Calu3 (cell line): ENCODE measurements at regions of chr9 and their contacts with region 1.

Region 1: DNA sequence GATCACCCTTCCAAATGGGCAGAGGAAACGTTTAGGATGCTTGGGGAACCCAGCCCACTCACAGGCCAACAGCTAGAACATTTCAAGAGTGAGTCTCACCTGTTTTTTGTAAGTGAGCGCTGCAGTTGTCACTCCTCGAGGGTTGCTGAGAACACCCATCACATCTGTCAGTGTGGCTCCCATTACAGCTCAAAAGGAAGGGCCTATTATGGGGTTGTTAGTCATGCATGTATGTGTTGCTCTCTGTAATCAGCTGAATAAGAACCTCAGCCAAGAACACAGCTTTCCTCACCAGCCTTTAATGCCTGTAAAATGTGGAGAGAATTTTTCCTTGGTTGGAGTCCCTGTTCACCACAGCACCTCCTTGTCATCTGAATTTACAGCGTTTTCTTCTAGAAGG is 196.3 kb upstream of the KLF4 start:
- DNase-seq: no peak
- H3K4me3 Mint-ChIP-seq: no peak overlapping the region
- H3K27ac Mint-ChIP-seq: no peak overlapping the region
- H3K4me1 Mint-ChIP-seq: no peaks in the 10 kb centered on the region
- H3K27me3 Mint-ChIP-seq: no peaks in the 10 kb centered on the region
- CTCF ChIP-seq: no peak

Region 2: GRCh38 chr9:107826966-107827703 is 141.2 kb after region 1 on chr9:
- CTCF ChIA-PET with region 1: interaction called, 12 read pairs
- intact Hi-C with region 1: no loop called
- DNase-seq: no peak
- H3K4me3 Mint-ChIP-seq: no peak overlapping the region
- H3K27ac Mint-ChIP-seq: no peak overlapping the region
- H3K4me1 Mint-ChIP-seq: no peaks in the 10 kb centered on the region
- H3K27me3 Mint-ChIP-seq: no peaks in the 10 kb centered on the region
- CTCF ChIP-seq: no peak